Colonic mucosa (tissue), 4 donors: ENCODE measurements at regions of chr12 and their contacts with region 1.

Region 1: DNA sequence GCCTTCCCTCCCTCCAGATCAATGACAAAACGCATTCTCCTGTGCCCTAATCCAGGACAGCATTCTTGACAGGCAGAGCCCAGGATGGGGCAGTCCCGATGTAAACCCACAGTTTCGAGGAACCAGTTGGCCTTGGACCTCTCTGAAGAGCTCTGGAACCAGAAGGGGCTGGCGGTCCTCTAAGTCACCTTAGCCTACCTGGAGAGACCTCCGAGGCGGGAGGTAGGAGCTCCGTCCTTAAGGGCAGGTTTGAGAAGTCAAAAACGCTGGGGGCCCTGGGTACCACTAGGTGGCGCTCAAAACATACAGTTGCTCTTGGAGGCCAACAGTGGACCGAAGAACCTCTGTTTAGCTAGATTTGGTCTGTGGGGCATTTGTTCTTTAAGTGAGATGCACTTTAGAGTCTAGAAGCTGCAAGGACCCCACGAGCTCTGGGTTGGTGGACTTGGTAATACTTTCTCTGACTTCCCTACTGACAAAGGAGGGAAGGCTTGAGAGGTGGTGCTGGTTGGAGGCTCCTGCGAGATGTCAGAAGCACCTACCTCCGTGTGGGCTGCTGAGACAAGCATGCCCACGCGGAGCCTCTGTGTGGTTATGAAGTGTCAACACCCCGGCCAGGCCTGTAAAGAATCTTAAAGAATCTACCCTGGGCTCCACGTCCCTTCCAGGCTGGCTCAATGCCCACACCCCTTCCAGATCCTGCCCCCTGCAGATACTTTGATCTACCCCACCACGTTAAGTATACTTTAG is 74.8 kb upstream of the CHST11 start:
- DNase-seq: peak; percentile 82
- H3K4me3 ChIP-seq: no peak overlapping the region
- H3K27ac ChIP-seq: no peak overlapping the region
- H3K4me1 ChIP-seq: no peaks in the 10 kb centered on the region
- H3K27me3 ChIP-seq: no peaks in the 10 kb centered on the region
- CTCF ChIP-seq: peak; percentile 94

Region 2: DNA sequence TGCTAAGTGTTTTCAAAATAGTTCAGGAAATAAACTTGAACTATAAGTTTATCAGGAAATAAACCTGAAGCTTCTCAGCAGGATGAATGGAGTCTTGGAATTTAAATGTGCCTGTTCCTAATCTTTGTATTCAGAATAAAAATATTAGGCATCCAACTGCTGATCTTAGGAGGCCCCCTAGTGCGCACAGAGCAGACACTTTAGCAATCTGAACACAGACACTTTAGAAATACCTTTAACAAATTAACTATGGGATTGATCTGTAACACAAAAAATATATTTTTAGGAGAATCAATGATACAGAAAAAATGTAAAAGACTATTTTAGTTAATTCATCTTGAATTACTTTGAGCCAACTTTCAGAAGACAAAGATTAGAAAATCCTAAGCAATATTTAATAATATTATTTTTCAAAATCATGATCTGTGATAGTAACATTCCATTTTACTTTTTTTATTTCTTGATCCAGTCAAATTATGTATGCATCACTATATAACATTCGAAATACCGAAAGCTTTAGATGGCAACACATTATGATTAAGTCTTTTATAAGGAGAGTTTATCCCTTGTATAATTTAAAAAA is 495.3 kb after region 1 on chr12:
- intact Hi-C with region 1: loop called (anchors 10 kb)
- DNase-seq: peak; percentile 23
- H3K4me3 ChIP-seq: no peak overlapping the region
- H3K27ac ChIP-seq: no peak overlapping the region
- H3K4me1 ChIP-seq: no peaks in the 10 kb centered on the region
- H3K27me3 ChIP-seq: no peaks in the 10 kb centered on the region
- CTCF ChIP-seq: peak; percentile 30